ENCODE measurements at regions of chr10 and their contacts with region 1.

Region 1: DNA sequence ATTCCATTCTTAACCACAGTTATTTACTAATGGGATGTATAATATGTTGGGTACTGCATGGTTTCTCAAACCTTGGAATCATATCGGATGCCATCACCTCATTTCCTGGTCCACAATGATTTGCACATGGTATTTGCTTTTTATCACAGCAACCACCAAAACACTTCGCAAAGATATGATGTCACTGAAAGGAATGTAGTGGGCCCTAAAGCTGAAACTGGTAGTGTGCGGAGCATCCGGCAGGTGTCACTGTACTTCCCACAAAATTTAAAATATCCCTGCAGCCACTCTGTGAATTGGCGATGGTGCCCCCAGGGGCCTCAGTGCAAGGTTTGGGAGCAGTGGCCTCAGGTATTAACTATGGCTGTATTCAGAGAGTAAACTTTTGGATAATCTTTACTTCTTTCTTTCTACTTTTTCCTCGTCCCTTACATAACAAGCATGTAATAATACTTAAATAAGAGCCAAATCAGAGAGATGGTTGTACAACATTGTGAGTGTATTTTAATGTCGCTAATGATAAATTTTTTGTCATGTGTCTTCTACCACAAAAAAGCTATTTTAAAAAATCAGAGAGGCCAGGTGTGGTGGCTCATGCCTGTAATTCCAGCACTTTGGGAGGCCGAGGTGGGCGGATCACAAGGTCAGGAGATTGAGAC is 66.2 kb downstream of the FAM241B start:
- DNase-seq: no peak
- H3K4me3 Mint-ChIP-seq: no peak overlapping the region
- H3K27ac Mint-ChIP-seq: no peak overlapping the region
- H3K4me1 Mint-ChIP-seq: no peaks in the 10 kb centered on the region
- H3K27me3 Mint-ChIP-seq: peaks cover 14% of the 10 kb centered on the region

Region 2: GRCh38 chr10:69327463-69328379 is 368.5 kb before region 1 on chr10:
- intact Hi-C with region 1: no loop called
- DNase-seq: no peak
- H3K4me3 Mint-ChIP-seq: peak overlapping the region; percentile 74
- H3K27ac Mint-ChIP-seq: peak overlapping the region; percentile 69
- H3K4me1 Mint-ChIP-seq: peaks cover 48% of the 10 kb centered on the region
- H3K27me3 Mint-ChIP-seq: no peaks in the 10 kb centered on the region

Region 3: DNA sequence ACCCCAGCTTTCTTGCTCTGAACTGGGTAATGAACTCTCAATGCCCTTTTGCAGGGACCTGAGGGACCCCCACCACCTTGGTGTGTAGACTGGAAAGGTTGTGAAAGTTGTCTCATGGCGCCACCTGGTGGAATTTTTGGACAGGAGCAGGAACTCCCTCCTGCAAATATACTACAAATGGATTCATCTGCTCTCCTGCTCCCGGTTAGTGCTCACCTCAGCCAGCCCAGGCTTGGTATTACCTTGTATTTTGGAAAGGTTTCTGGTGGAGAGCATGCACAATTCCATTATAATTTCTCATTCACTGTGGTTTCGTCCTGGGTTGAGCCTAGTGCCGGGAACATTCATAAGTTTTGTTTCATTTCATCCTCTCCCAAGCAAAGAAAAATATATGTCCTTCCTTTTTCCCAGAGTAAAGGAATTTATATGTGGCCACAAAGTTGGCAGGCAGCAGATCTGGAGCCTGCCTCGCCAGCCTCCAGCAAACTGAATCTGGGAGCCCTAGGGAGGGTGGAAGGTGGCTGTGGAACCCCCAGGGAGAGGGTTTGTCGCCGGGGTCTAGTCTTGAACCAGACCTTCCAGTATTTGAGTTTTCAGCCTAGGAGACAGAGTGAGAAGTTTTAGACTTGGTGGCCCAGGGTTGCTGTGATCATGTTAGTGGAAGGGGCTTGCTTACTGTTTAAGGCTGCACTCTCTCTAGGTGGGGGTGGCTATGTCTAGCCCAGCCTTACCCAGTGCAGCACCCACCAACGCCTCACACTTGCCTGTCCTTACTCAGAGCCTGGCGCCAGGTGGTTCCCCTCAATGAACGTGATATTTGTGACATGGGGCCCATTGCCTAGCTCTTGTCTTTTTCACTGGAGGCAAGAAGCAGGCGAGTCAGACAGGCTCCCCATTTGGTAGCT is 56.7 kb before region 1 on chr10:
- intact Hi-C with region 1: no loop called
- DNase-seq: peak; percentile 38
- H3K4me3 Mint-ChIP-seq: no peak overlapping the region
- H3K27ac Mint-ChIP-seq: no peak overlapping the region
- H3K4me1 Mint-ChIP-seq: no peaks in the 10 kb centered on the region
- H3K27me3 Mint-ChIP-seq: peaks cover 3% of the 10 kb centered on the region

Region 4: DNA sequence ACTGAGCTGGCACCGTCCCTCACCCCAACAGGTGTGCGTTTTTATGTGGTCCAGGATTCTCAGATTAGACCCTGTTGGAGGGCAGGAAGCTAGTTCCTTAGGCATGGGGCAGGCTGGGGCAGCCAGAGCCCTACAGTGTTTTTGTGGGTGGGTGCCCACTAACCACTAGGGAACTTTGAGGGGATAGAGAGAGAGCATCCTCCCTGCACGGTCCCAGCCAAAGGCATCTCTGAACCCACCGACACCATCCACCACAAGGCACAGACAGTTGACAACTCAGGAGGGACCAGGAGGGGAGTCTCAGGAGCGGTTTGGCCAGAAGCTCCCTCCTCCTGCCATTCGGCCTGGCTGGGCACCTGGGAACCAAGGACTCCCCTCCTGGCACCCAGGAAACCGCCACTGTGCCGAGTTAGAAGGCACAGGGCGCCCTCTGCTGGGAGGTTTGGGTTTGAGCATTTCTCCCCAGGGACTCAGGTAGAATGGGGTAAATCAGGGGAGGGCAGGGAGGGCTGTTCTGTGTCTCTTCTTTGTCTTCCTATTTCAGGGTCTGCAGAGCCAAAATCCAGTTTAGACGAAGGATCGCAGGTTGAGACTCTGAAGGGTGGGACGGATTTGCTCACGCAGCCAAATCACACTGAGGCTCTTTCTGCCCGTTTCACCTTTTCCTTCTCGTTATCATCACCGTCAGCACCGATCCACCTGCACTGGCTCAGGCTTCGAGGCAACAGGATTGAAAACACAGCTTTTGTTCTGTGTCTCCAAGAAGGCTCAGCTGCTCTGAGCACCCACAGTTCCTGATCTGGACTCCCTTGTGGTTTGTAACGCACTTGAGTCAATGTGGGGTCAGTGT is 20.7 kb after region 1 on chr10:
- intact Hi-C with region 1: loop called (anchors 1 kb)
- DNase-seq: peak; percentile 29
- H3K4me3 Mint-ChIP-seq: no peak overlapping the region
- H3K27ac Mint-ChIP-seq: no peak overlapping the region
- H3K4me1 Mint-ChIP-seq: no peaks in the 10 kb centered on the region
- H3K27me3 Mint-ChIP-seq: no peaks in the 10 kb centered on the region

Measured in activated T-helper 1 cell treated with anti-CD3 and anti-CD28 coated beads, Interleukin-12 subunit alpha, Interleukin-12 subunit beta, Interleukin-2, Interleukin-4 antibody, amounts not matched to agents 30 ng/mL and 10 ng/mL and 1 ng/mL, durations not matched to agents 14 hours and 24 hours and 36 hours (primary cell).